Right ventricle myocardium inferior (tissue), 1 donor: ENCODE measurements at regions of chr3 and their contacts with region 1.

Region 1: DNA sequence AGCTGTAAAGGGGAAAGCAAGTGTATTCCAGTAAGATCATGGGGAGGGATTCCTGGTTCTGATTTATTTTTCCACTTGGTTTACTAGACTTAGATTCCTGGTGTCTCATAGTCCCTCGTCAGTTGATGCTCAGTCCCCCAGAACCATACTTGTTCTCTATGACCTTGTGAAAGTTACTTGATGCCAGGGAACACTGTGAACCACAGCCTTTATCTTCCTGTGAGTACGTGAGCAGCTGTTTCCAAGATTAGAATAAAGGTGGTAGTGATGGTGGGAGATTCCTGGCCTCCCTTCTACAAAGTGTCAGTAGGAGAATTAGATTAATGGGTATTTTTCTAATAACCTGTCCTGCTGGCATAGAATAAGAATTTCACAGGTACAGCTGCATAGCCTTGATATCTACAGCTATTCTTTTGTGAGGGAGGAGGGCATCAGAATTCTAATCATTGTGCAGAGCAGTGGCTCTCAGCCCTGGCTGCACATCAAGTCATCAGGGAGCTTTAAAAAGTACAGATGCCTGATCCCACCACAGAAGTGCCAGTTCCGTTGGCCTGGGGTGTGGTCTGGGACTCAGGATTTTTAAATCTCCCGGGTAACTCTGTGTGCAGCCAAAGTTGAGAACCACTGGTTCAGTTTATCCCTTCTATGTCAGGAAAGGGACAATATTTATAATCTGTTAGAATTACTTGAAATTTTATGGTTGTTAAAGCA is 20.0 kb downstream of the GPD1L start:
- DNase-seq: no peak
- ATAC-seq: peak; percentile 87

Region 2: GRCh38 chr3:32111560-32111959 is 14.9 kb before region 1 on chr3:
- intact Hi-C with region 1: loop called (anchors 1 kb)
- DNase-seq: no peak
- ATAC-seq: peak; percentile 43